Activated CD4-positive, alpha-beta memory T cell treated with anti-CD3 and anti-CD28 coated beads for 36 hours (primary cell): ENCODE measurements at regions of chr5 and their contacts with region 1.

Region 1: GRCh38 chr5:154157483-154158378 is 32.8 kb upstream of the GALNT10 start:
- DNase-seq: peak; percentile 19
- H3K4me3 Mint-ChIP-seq: no peak overlapping the region
- H3K27ac Mint-ChIP-seq: no peak overlapping the region
- H3K4me1 Mint-ChIP-seq: no peaks in the 10 kb centered on the region
- H3K27me3 Mint-ChIP-seq: peaks cover 4% of the 10 kb centered on the region

Region 2: DNA sequence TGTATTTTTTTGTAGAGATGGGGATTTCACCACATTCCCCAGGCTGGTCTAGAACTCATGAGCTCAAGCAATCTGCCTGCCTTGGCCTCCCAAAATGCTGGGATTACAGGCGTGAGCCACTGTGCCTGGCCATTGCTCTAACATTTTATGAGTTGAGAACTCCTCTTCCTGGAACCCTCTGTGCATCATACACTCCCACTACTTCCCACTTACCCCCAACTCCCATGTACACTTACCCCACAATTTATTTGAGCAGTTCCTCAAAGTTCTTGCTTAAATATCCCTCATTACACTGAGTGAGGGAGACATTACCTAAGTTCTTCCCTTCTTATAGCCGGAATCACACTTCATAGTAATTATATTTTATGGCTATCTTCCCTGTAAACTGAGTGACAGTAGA is 10.1 kb before region 1 on chr5:
- CTCF ChIA-PET with region 1: interaction called, 10 read pairs
- POLR2A ChIA-PET with region 1: no interaction called
- intact Hi-C with region 1: no loop called
- DNase-seq: no peak
- H3K4me3 Mint-ChIP-seq: no peak overlapping the region
- H3K27ac Mint-ChIP-seq: no peak overlapping the region
- H3K4me1 Mint-ChIP-seq: no peaks in the 10 kb centered on the region
- H3K27me3 Mint-ChIP-seq: peaks cover 6% of the 10 kb centered on the region